Activated naive CD4-positive, alpha-beta T cell treated with anti-CD3 and anti-CD28 coated beads for 36 hours (primary cell): ENCODE measurements at regions of chr1 and their contacts with region 1.

Region 1: GRCh38 chr1:61077676-61078541 is 4.5 kb upstream of the NFIA start:
- DNase-seq: peak; percentile 96
- H3K4me3 Mint-ChIP-seq: peak overlapping the region; percentile 92
- H3K27ac Mint-ChIP-seq: peak overlapping the region; percentile 75
- H3K4me1 Mint-ChIP-seq: peaks cover 43% of the 10 kb centered on the region
- H3K27me3 Mint-ChIP-seq: peaks cover 9% of the 10 kb centered on the region

Region 2: DNA sequence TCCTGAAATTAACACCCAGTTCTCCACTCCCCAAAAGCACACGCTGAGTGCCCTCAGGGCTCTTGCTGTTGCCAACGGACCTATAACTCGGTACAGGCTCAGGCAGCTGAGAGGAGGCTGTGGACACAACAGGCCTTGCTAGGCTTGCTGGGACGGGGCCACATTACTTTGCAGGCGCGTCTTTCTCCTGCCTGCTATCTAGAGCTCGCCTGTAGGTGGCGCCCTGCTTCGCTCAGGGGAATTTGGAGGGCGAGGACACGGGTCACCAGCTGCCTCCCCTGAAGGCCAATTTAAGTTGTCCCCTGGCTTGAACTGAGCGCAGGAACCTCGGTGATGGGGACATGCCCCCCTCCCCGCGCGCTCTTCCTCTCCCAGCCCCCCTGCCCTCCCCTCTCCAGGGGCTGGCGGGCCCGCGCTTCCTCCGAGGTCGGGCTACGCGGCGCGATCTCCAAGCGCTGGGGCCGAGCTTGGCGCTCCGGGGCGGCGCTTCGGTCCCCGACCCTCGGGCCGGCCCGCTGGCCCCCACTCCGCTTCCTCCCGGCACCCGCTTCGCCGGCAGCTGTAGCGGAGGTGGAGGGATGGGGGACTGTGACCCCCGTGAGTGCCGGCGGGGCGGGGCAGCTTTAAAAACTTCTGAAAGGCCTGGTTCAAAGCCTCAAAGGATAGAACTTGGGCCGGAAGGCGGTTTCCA is 27.9 kb before region 1 on chr1:
- CTCF ChIA-PET with region 1: interaction called, 15 read pairs
- intact Hi-C with region 1: loop called (anchors 1 kb)
- DNase-seq: peak; percentile 93
- H3K4me3 Mint-ChIP-seq: peak overlapping the region; percentile 74
- H3K27ac Mint-ChIP-seq: no peak overlapping the region
- H3K4me1 Mint-ChIP-seq: peaks cover 28% of the 10 kb centered on the region
- H3K27me3 Mint-ChIP-seq: peaks cover 42% of the 10 kb centered on the region

Region 3: GRCh38 chr1:61210435-61211154 is 132.7 kb after region 1 on chr1:
- CTCF ChIA-PET with region 1: no interaction called
- intact Hi-C with region 1: no loop called
- DNase-seq: no peak
- H3K4me3 Mint-ChIP-seq: no peak overlapping the region
- H3K27ac Mint-ChIP-seq: no peak overlapping the region
- H3K4me1 Mint-ChIP-seq: no peaks in the 10 kb centered on the region
- H3K27me3 Mint-ChIP-seq: no peaks in the 10 kb centered on the region

Region 4: DNA sequence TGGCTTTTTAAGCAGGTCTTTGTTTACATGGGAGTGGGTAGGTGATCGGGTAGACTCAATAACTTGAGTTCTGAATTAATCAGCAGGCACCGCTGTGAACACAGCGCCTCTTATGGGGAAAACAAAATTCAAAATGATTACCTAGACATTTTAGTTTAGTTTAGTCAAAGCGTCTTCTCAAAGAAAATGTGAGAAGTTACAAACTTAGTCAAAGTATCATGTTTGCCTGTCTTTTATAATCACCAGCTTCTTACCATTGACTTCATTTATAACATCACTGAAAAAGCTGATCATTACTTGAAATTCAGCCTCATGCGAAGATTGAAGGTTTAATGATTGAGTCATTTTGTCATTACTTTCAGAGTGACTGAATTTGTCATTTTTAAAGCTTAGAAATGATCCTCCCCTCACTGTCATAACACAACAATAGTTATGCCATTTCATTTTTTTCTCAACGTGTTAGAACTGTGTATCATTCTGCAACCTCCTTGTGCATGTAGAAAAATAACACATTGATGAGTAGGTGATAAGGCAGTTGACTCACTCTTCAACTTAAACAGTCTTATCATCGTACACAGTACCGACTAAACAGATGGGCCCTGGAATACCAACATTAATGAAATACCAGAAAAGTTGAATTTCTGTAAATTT is 193.0 kb after region 1 on chr1:
- CTCF ChIA-PET with region 1: no interaction called
- intact Hi-C with region 1: loop called (anchors 1 kb)
- DNase-seq: peak; percentile 24
- H3K4me3 Mint-ChIP-seq: no peak overlapping the region
- H3K27ac Mint-ChIP-seq: peak overlapping the region; percentile 37
- H3K4me1 Mint-ChIP-seq: peaks cover 18% of the 10 kb centered on the region
- H3K27me3 Mint-ChIP-seq: peaks cover 7% of the 10 kb centered on the region

Region 5: DNA sequence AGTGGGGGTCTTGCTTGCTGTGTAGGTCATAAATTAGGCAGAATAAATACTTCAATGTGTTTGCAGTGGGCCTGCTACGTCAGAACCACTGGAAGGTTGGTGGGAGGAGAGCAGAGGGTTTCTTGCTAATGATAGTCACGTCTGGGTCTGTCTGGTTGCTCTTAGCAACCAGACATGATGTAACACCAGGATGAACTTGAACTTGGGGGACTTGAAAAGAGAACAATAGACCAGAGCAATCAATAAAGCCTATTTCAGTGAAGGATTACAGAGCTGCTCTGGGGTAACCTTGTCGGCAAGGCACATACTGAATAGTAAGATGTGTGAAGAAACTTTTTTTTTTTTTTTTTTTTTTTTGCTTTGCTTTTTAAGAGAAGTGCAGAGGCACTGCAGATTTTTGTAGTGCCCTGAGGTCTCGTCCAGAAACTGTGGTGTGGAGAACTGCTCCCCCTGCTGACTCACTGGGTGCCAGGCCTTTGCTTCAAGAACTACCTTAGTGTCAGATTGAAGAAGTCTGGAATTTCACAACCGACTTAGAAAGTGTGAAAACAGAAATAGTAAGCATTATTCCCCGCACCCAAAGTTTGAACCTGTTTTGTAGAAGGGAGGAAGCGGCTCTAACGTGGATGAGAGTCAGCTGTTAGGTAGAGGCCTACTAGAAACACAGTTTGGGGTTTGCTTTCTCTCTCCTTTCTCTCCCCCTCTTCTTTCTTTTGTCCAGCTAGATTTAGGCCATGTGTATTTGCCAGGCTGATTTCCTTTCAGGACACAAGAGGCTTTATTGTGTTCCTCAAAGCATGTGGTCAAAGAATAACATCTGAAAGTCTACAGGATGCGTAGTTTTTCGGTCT is 375.4 kb after region 1 on chr1:
- CTCF ChIA-PET with region 1: no interaction called
- intact Hi-C with region 1: loop called (anchors 1 kb)
- DNase-seq: peak; percentile 86
- H3K4me3 Mint-ChIP-seq: no peak overlapping the region
- H3K27ac Mint-ChIP-seq: no peak overlapping the region
- H3K4me1 Mint-ChIP-seq: peaks cover 9% of the 10 kb centered on the region
- H3K27me3 Mint-ChIP-seq: no peaks in the 10 kb centered on the region

Region 6: DNA sequence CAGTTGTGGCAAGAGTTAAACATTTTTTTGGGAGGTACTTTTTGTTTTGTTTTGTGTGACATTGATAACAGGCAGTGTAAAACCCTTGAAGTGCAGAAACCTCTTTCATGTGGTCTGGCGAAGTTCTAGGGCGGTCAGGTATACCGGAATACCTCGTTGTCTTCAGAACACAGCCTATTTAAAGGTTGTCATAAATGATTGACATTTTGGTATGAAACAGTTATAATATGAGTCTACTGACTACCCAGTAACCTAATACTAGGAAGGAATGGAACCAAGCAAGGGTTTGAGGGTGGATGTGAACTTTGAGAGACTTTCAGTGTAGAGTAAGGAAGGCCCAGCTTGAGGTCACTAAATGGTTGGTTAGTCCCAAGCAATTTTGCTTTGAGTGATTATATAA is 704.9 kb after region 1 on chr1:
- CTCF ChIA-PET with region 1: no interaction called
- intact Hi-C with region 1: loop called (anchors 2 kb)
- DNase-seq: peak; percentile 82
- H3K4me3 Mint-ChIP-seq: no peak overlapping the region
- H3K27ac Mint-ChIP-seq: peak overlapping the region; percentile 39
- H3K4me1 Mint-ChIP-seq: peaks cover 39% of the 10 kb centered on the region
- H3K27me3 Mint-ChIP-seq: no peaks in the 10 kb centered on the region

Region 7: GRCh38 chr1:62783723-62784508 is 1706.0 kb after region 1 on chr1 and contains the start of gene ATG4C:
- CTCF ChIA-PET with region 1: no interaction called
- intact Hi-C with region 1: loop called (anchors 10 kb)
- DNase-seq: peak; percentile 96
- H3K4me3 Mint-ChIP-seq: no peak within 1 kb of the TSS
- H3K27ac Mint-ChIP-seq: no peak within 1 kb of the TSS
- H3K4me1 Mint-ChIP-seq: peaks cover 13% of the 10 kb centered on the region
- H3K27me3 Mint-ChIP-seq: peaks cover 7% of the 10 kb centered on the region
- total RNA-seq, gene ATG4C: 13.4 to 15.1 TPM